WTC11 (cell line): ENCODE measurements at regions of chr1 and their contacts with region 1.

Region 1: GRCh38 chr1:205273551-205273982 is 45.8 kb downstream of the TMCC2 start:
- DNase-seq: peak; percentile 95
- ATAC-seq: peak; percentile 78
- H3K4me3 Mint-ChIP-seq: no peak overlapping the region
- H3K27ac Mint-ChIP-seq: peak overlapping the region; percentile 83
- H3K4me1 Mint-ChIP-seq: peaks cover 17% of the 10 kb centered on the region
- H3K27me3 Mint-ChIP-seq: no peaks in the 10 kb centered on the region
- CTCF ChIP-seq: peak; percentile 97

Region 2: GRCh38 chr1:205190845-205191577 is 82.6 kb before region 1 on chr1:
- CTCF ChIA-PET with region 1: interaction called, 10 read pairs
- POLR2A ChIA-PET with region 1: no interaction called
- DNase-seq: no peak
- ATAC-seq: peak; percentile 5; the same call in 1 of the 2 replicates
- H3K4me3 Mint-ChIP-seq: peak overlapping the region; percentile 51
- H3K27ac Mint-ChIP-seq: peak overlapping the region; percentile 89
- H3K4me1 Mint-ChIP-seq: peaks cover 80% of the 10 kb centered on the region
- H3K27me3 Mint-ChIP-seq: no peaks in the 10 kb centered on the region
- CTCF ChIP-seq: no peak

Region 3: DNA sequence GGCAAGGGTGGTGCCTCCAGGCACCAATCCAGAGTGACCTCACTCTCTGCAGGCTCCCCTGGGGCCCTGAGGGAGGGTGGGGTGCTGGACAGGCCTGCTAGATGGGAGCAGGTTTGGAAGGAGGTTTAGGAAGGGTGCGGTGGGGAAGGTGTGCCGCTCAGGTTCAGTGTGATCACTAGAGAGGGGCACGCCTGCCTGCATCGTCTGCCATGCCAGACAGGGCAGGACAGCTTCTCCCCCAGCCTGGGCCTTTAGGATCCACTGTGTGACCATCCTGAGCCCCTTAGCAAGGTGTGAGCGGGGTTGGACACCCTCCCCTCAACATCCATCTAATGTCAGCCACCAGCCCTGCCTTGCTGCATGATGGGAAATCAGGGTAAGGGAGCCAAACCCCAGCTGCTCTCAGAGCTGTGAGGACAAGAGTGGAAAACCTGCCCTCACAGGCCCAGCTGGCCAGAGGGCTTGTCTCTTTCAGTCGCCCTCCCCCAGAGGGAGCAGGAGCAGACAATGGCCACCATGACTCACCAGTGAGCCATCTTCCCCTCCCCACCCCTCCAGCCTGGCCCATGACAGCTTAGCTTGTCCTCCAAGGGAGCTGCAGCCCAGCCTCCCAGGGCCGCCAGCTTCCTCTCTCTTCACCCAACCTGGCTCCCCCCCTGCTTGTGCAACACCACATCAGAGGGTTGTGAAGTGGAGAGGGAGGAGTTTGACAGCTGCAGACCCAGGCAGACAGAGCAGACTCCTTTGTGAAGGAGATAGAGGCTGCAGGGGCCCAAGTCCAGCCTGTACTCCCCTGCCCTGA is 11.0 kb after region 1 on chr1:
- CTCF ChIA-PET with region 1: interaction called, 45 read pairs
- POLR2A ChIA-PET with region 1: interaction called, 7 read pairs
- DNase-seq: peak; percentile 80
- ATAC-seq: peak; percentile 89
- H3K4me3 Mint-ChIP-seq: no peak overlapping the region
- H3K27ac Mint-ChIP-seq: peak overlapping the region; percentile 90
- H3K4me1 Mint-ChIP-seq: peaks cover 49% of the 10 kb centered on the region
- H3K27me3 Mint-ChIP-seq: no peaks in the 10 kb centered on the region
- CTCF ChIP-seq: no peak

Region 4: GRCh38 chr1:205313563-205314308 is 40.2 kb after region 1 on chr1:
- CTCF ChIA-PET with region 1: interaction called, 55 read pairs
- POLR2A ChIA-PET with region 1: interaction called, 25 read pairs
- DNase-seq: peak; percentile 82
- ATAC-seq: peak; percentile 94
- H3K4me3 Mint-ChIP-seq: peak overlapping the region; percentile 54
- H3K27ac Mint-ChIP-seq: peak overlapping the region; percentile 99
- H3K4me1 Mint-ChIP-seq: peaks cover 70% of the 10 kb centered on the region
- H3K27me3 Mint-ChIP-seq: no peaks in the 10 kb centered on the region; the same call in none of the 2 replicates
- CTCF ChIP-seq: no peak

Region 5: DNA sequence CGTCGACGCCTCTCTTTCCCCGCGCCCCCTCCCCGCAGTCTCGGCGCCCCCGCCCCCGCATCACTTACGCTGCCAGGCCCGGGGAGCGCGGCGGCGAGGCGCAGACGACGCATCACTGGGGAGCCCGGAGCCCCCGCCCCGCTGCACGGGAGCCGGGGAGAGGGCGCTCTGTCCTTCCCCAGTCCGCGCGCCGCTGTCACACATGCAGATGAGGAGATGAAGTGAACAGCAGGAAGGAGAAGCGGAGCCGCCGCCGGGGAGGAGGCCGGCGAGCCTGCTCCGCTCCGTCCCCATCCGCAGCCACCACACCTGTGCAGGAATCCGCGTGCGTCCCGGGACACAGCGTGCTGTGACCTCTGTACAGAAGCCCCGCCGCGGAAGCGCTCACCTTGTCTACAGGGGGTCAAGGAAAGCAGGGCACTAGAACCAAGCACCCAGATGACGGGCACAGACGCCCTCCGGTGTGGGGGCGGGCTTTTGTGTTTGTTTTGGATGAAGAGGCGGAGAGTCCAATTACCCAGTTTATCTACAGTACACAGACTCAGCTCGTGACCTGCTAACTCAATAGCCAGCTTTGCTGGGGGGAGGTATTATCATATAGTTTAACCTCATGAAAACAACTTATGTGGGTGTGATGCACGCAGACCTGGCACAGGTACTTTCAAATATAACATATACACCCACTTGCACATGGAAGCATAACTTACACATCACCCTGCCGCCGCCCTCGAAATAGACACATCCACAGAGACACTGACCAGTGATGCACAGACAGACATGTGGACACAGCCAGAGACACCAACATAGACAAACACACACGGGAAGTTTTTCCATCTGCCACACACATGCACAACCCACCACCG is 70.7 kb after region 1 on chr1:
- CTCF ChIA-PET with region 1: interaction called, 30 read pairs
- POLR2A ChIA-PET with region 1: no interaction called
- DNase-seq: peak; percentile 66
- ATAC-seq: peak; percentile 57
- H3K4me3 Mint-ChIP-seq: peak overlapping the region; percentile 72
- H3K27ac Mint-ChIP-seq: no peak overlapping the region
- H3K4me1 Mint-ChIP-seq: peaks cover 33% of the 10 kb centered on the region
- H3K27me3 Mint-ChIP-seq: peaks cover 55% of the 10 kb centered on the region
- CTCF ChIP-seq: no peak

Region 6: DNA sequence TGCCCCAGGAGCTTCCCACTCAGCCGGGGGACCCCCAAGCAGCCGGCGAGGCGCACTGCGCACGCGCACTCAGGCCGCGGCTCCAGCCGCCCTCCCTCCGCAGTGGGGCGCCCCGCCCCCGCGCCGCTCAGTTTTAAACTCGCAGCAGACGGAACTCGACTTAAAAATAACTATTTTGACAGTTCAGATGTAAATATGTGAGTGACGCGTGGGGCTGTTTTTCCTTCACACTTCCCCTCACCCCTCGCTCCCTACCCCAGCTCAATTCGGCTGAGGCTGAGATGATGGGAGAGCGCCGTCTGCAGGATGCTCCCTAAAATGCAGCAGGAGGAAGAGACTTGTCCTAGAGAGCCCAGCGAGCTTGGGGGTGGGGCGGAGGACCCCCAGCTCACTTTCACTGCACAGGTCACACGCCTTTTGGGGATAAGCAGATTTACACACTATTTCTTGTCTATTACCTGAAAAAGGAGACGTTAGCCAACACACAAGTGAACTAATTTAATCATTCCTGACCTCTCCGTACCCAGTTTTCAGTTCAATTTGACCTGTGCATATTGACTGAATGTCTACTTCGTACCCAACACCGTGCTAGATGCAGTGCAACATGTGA is 157.2 kb after region 1 on chr1:
- CTCF ChIA-PET with region 1: interaction called, 15 read pairs
- POLR2A ChIA-PET with region 1: no interaction called
- DNase-seq: peak; percentile 81
- ATAC-seq: peak; percentile 83
- H3K4me3 Mint-ChIP-seq: peak overlapping the region; percentile 83
- H3K27ac Mint-ChIP-seq: no peak overlapping the region
- H3K4me1 Mint-ChIP-seq: peaks cover 31% of the 10 kb centered on the region
- H3K27me3 Mint-ChIP-seq: peaks cover 82% of the 10 kb centered on the region
- CTCF ChIP-seq: peak; percentile 81